ENCODE measurements at regions of chr16 and their contacts with region 1.

Region 1: GRCh38 chr16:21646721-21647561 is 5.5 kb downstream of the IGSF6 start:
- DNase-seq: peak; percentile 91
- ATAC-seq: peak; percentile 88
- H3K4me3 Mint-ChIP-seq: peak overlapping the region; percentile 77
- H3K27ac Mint-ChIP-seq: peak overlapping the region; percentile 88
- H3K4me1 Mint-ChIP-seq: peaks cover 60% of the 10 kb centered on the region
- H3K27me3 Mint-ChIP-seq: no peaks in the 10 kb centered on the region

Region 2: DNA sequence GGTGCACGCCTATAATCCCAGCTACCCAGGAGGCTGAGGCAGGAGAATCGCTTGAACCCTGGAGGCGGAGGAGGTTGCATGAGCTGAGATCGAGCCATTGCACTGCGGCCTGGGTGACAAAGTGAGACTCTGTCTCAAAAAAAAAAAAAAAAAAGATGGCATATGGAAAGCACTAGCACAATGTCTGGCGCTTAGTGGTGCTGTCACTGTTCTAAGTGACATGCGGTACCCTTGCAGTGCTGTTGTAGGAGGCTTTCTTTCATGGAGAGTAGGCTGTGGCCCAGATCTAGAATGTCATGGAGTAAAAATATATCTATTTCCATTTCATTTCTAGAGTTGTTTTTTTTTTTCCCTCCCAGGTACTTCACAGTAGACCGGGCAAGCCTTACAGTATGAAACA is 62.1 kb before region 1 on chr16:
- CTCF ChIA-PET with region 1: interaction called, 78 read pairs
- POLR2A ChIA-PET with region 1: no interaction called
- DNase-seq: no peak
- ATAC-seq: no peak
- H3K4me3 Mint-ChIP-seq: no peak overlapping the region
- H3K27ac Mint-ChIP-seq: no peak overlapping the region
- H3K4me1 Mint-ChIP-seq: peaks cover 3% of the 10 kb centered on the region
- H3K27me3 Mint-ChIP-seq: peaks cover 4% of the 10 kb centered on the region

Region 3: GRCh38 chr16:21590287-21590686 is 56.7 kb before region 1 on chr16:
- CTCF ChIA-PET with region 1: interaction called, 16 read pairs
- POLR2A ChIA-PET with region 1: interaction called, 4 read pairs
- DNase-seq: no peak
- ATAC-seq: no peak
- H3K4me3 Mint-ChIP-seq: no peak overlapping the region
- H3K27ac Mint-ChIP-seq: no peak overlapping the region
- H3K4me1 Mint-ChIP-seq: peaks cover 1% of the 10 kb centered on the region
- H3K27me3 Mint-ChIP-seq: peaks cover 3% of the 10 kb centered on the region

Region 4: DNA sequence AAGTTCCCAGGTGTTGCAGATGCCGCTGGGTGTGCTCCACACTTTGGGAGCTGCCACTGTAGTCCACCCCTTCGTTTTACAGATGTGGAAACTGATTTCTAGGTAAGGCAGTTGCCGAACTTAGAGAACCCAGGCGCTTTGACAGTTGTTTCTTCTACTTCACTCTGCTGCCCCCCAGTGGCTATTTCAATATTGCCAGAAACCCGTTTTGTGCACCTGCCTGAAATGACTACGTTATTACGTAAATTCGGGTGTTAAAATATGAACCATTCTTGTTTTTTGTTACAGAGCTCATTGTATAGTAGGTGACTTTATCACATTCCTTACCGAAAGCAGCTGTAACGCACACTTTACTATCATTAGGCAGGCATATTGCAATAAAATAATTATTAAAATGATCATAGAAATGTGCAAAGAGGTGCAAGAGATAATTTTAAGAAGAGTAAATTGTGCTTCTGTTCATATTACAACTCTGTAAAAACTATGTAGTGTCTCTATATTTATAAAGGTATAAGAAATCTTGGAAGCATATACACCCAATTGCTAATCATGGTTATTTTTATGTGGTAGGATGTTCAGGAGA is 61.7 kb after region 1 on chr16:
- CTCF ChIA-PET with region 1: interaction called, 12 read pairs
- POLR2A ChIA-PET with region 1: no interaction called
- DNase-seq: peak; percentile 92
- ATAC-seq: peak; percentile 82
- H3K4me3 Mint-ChIP-seq: no peak overlapping the region
- H3K27ac Mint-ChIP-seq: no peak overlapping the region
- H3K4me1 Mint-ChIP-seq: peaks cover 3% of the 10 kb centered on the region
- H3K27me3 Mint-ChIP-seq: no peaks in the 10 kb centered on the region